Activated naive CD4-positive, alpha-beta T cell treated with anti-CD3 and anti-CD28 coated beads for 36 hours (primary cell): ENCODE measurements at regions of chr2 and their contacts with region 1.

Region 1: GRCh38 chr2:113895301-113895700 is 5.4 kb downstream of the ACTR3 start:
- DNase-seq: no peak
- H3K4me3 Mint-ChIP-seq: peak overlapping the region; percentile 95
- H3K27ac Mint-ChIP-seq: peak overlapping the region; percentile 54
- H3K4me1 Mint-ChIP-seq: peaks cover 78% of the 10 kb centered on the region
- H3K27me3 Mint-ChIP-seq: no peaks in the 10 kb centered on the region

Region 2: GRCh38 chr2:113741091-113741490 is 154.2 kb before region 1 on chr2:
- CTCF ChIA-PET with region 1: no interaction called
- intact Hi-C with region 1: no loop called
- DNase-seq: no peak
- H3K4me3 Mint-ChIP-seq: no peak overlapping the region
- H3K27ac Mint-ChIP-seq: no peak overlapping the region
- H3K4me1 Mint-ChIP-seq: no peaks in the 10 kb centered on the region
- H3K27me3 Mint-ChIP-seq: no peaks in the 10 kb centered on the region

Region 3: GRCh38 chr2:113910110-113910717 is 14.9 kb after region 1 on chr2:
- CTCF ChIA-PET with region 1: interaction called, 6 read pairs
- intact Hi-C with region 1: loop called (anchors 1 kb)
- DNase-seq: peak; percentile 85
- H3K4me3 Mint-ChIP-seq: no peak overlapping the region
- H3K27ac Mint-ChIP-seq: peak overlapping the region; percentile 84
- H3K4me1 Mint-ChIP-seq: peaks cover 73% of the 10 kb centered on the region
- H3K27me3 Mint-ChIP-seq: no peaks in the 10 kb centered on the region